ENCODE measurements at regions of chr2 and their contacts with region 1.

Region 1: GRCh38 chr2:231925303-231926179 is 655 bp downstream of the NPPC start:
- ATAC-seq: peak; percentile 48 to 90 (median 54)
- H3K4me3 ChIP-seq: peak overlapping the region; percentile 51 to 68 (median 53)
- H3K27ac ChIP-seq: peak overlapping the region in 1 of 2 donors; percentile 3
- H3K4me1 ChIP-seq: peaks cover 4 to 5% of the 10 kb centered on the region in 2 donors

Region 2: DNA sequence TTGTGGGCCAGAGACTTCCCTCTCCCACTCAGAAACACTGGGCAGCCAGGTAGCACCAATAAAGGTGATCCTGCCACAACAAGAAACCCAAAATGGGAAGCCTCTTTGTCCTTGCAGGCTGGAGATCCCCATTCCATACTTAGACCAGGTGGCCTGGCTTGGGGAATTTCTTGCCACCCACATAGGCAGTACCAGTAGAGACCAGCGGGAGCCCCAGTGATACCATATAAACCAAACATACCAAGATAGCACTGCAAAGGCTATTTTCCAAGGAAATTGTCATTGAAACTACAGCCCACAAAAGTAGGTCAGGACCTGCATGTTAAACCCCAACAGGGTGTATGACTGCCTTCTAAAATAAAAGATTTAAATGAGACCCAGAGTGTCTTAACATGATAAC is 207.5 kb after region 1 on chr2:
- in situ Hi-C with region 1: loop called in 3 of 9 experiments (anchors 10 to 25 kb)
- ATAC-seq: peak in 1 of 8 experiments; percentile 52
- H3K4me3 ChIP-seq: no peak overlapping the region
- H3K27ac ChIP-seq: no peak overlapping the region
- H3K4me1 ChIP-seq: no peaks in the 10 kb centered on the region